Testis (tissue), 5 donors: ENCODE measurements at regions of chr20 and their contacts with region 1.

Region 1: DNA sequence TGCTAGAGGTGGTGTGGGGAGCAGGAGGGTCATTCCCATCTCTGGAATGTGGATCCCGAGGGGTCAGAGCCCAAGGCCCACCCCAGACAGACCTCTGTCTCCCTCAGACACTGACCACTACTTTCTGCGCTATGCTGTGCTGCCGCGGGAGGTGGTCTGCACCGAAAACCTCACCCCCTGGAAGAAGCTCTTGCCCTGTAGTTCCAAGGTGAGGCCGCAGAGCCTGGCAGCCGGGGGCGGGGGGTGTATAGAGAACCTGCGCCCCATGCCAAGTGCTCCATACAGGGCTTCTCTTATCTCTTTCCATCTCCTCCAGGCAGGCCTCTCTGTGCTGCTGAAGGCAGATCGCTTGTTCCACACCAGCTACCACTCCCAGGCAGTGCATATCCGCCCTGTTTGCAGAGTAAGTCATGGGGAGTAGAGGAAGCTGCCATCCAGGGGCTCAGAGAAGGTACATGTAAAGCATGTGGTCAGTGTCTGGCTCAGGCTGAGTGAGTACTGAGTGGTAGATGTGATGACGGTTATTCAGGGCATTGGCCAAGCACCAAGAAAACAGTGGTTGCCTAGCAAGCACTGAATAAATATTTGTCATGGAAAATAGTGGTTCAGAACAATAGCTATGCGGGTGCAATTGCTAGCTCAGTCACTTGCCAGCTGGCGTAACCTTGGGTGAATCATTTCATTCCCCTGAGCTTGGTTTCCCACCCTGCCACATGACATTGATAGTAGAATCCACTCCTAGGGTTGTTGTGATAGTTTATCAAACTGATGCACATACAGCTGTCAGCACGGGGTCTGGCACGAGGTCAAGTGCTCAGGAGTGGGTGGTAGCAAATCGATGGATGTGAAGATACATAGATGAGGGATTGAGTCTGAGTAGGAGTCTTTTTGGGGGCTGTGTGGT is 3.5 kb downstream of the PIGT start:
- DNase-seq: no peak
- H3K4me3 ChIP-seq: no peak overlapping the region
- H3K27ac ChIP-seq: no peak overlapping the region
- H3K4me1 ChIP-seq: peaks cover 6% of the 10 kb centered on the region
- H3K27me3 ChIP-seq: no peaks in the 10 kb centered on the region
- CTCF ChIP-seq: no peak
- POLR2A ChIP-seq: no peak

Region 2: GRCh38 chr20:45290677-45291355 is 128.6 kb before region 1 on chr20:
- intact Hi-C with region 1: no loop called
- DNase-seq: peak; percentile 89
- H3K4me3 ChIP-seq: no peak overlapping the region
- H3K27ac ChIP-seq: no peak overlapping the region
- H3K4me1 ChIP-seq: no peaks in the 10 kb centered on the region
- H3K27me3 ChIP-seq: no peaks in the 10 kb centered on the region
- CTCF ChIP-seq: peak; percentile 41 to 87 (median 76)
- POLR2A ChIP-seq: no peak

Region 3: DNA sequence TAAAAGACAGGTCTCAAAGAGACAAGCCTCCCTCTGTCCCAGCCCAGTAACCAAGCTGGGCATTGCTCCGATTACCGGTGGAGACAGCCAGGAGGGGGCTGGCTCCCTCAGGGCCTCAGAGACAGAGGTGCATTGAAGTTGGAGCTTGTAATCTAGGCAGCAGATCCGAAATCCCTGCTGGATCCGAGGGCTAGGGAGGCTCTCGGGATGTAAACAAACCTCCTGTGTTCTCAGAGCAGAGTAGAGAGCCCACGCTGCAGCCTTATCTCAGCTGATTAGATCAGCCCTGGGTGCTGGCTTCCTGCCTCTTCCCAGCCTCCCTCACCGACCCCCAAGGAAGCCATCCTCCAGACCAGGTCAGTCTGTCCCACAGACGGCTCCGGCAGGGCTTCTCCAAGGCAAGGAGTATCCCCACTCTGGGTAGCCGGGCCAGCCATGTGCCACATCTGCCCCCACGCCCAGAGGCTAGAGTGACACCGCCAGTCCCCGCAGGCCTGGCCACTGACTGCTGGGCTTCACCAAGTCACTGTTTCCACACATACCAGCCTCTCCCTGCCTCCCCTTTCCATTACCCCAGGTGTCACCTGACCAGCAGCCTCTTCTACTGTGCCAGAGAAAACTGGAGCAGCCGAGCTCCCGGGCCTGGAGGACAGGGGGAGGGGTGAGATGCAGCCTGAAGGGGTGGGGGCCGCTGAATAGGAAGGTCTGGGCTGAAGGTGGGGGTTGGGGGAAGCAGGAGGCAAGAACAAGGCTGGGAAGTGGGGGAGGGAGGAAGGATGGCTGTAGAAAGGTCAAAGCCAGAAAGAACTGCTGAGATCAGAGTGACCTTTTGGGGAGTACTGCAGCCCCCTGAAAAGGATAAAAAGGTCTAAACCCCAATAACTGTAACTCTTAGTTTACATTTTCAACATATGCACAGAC is 77.2 kb before region 1 on chr20:
- intact Hi-C with region 1: no loop called
- DNase-seq: peak; percentile 90
- H3K4me3 ChIP-seq: no peak overlapping the region
- H3K27ac ChIP-seq: peak overlapping the region; percentile 2 to 59
- H3K4me1 ChIP-seq: peaks cover 54% of the 10 kb centered on the region
- H3K27me3 ChIP-seq: no peaks in the 10 kb centered on the region
- CTCF ChIP-seq: no peak
- POLR2A ChIP-seq: no peak

Region 4: DNA sequence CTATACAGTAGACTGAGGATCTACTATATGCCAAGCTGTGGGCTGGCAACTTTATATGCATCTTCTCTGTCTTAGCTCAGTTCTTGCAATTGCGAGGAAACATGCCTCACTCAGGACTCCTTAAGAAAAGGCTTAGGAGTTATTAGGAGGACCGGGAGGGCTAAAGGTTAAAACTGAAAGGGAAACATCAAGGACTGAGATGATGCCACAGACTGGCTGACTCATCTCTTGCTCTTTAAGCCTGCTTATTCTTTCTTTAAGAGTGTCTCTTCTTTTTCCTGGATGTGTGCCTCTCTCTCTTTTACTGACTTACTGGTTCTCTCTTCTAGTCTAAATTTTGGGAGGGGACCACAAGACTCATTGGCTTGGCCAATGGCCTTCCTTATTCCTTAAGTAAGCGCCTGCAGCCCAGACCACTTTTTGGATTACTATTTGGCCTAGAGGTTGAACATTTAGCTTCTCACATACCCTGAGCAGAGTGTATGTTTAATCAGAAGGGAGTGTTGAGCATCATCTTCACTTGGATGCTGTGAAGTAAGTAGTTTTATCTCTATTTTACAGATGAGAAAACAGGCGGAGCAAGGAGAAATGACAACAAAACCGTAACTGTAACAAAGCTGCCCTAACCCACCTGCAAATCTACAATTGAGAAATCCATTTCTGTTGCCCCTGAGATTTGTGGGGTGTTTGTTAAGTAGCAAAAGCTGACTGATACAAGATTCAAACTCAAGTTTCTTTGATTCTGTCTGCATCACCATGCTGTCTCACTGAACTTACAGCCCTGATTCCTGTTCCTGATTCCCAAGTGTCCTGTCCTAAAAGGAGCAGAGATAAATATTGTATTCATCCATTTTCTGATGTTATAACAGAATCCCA is 64.0 kb before region 1 on chr20:
- intact Hi-C with region 1: loop called (anchors 2 kb)
- DNase-seq: no peak
- H3K4me3 ChIP-seq: no peak overlapping the region
- H3K27ac ChIP-seq: no peak overlapping the region
- H3K4me1 ChIP-seq: peaks cover 23% of the 10 kb centered on the region
- H3K27me3 ChIP-seq: no peaks in the 10 kb centered on the region
- CTCF ChIP-seq: no peak
- POLR2A ChIP-seq: no peak

Region 5: DNA sequence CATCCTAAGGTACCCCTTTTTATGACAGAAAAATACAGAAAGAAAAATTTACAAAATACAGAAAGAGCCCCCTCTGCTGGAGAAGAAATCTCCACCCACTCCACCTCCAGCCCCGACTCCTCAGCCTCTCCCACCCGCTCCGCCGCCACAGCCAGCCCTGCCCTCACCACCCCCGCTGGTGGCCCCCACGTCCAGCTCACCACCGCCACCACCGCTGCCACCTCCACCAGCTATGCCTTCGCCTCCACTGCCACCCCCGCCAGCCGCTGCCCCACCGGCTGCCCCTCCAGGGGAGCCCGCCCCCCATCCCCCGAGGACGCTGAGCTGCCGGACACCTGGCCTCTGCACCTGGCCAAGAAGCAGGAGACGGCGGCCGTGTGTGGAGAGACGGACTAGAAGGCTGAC is 67.8 kb after region 1 on chr20:
- intact Hi-C with region 1: no loop called
- DNase-seq: no peak
- H3K4me3 ChIP-seq: peak overlapping the region; percentile 34 to 49
- H3K27ac ChIP-seq: no peak overlapping the region
- H3K4me1 ChIP-seq: no peaks in the 10 kb centered on the region
- H3K27me3 ChIP-seq: no peaks in the 10 kb centered on the region
- CTCF ChIP-seq: no peak
- POLR2A ChIP-seq: no peak